ENCODE measurements at regions of chr1 and their contacts with region 1.

Region 1: DNA sequence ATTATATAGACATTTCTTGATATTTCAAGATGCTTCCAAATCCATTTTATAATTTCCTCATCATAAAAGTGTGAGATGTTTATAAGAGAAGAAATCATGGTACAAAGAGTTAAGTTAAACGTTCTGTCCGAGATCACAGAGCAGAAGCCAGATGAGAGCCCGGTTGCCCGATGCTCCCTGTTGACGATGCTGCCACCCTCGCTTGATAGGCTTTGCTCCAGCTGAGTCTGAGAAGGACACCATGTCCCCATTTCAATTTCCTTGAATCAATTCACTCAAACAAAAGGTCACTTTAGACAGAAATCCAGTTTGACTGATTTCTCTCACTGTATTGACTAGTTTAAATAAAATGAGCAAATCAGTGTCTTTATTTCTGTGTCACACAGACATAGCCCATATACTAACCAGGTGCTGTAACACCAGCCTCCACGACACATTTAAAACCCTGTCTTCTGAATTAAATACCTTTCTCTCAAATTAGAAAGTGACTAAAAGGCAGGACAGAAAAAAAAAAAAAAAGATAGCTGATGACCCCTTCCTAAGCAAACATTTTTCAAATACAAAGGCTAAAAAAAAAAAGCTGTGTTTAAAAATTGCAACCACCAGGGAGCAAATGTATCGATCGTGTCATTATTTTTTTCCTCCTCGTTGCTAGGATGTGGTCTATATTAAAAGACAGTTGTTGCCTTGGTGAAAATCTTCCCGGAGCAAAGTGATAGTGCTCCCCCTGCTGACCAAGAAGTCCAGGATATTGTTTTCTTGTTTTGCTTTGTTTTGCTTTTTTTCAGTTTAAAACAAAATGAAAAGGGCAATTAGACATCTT is 35.2 kb downstream of the DNASE2B start:
- DNase-seq: peak in 2 of 4 donors; percentile 63 to 78
- ATAC-seq: peak; percentile 92
- H3K4me3 ChIP-seq: no peak overlapping the region
- H3K27ac ChIP-seq: no peak overlapping the region
- H3K4me1 ChIP-seq: peaks cover 0 to 29% of the 10 kb centered on the region in 2 donors
- H3K27me3 ChIP-seq: no peaks in the 10 kb centered on the region
- CTCF ChIP-seq: peak; percentile 49 to 77

Region 2: GRCh38 chr1:84143796-84144565 is 289.5 kb before region 1 on chr1 and contains the start of gene PRKACB:
- intact Hi-C with region 1: loop called in 1 of 2 experiments (anchors 5 kb)
- DNase-seq: no peak
- ATAC-seq: peak; percentile 85
- H3K4me3 ChIP-seq: peak within 1 kb of the TSS in 1 of 2 donors; percentile 13
- H3K27ac ChIP-seq: peak within 1 kb of the TSS; percentile 55 to 57
- H3K4me1 ChIP-seq: peaks cover 0 to 36% of the 10 kb centered on the region in 2 donors
- H3K27me3 ChIP-seq: no peaks in the 10 kb centered on the region
- CTCF ChIP-seq: no peak
- polyA plus RNA-seq, gene PRKACB: 43.5 to 54.9 (median 46.8) TPM

Region 3: GRCh38 chr1:84245563-84245962 is 187.9 kb before region 1 on chr1:
- intact Hi-C with region 1: no loop called
- DNase-seq: no peak
- ATAC-seq: no peak
- H3K4me3 ChIP-seq: no peak overlapping the region
- H3K27ac ChIP-seq: no peak overlapping the region
- H3K4me1 ChIP-seq: no peaks in the 10 kb centered on the region
- H3K27me3 ChIP-seq: no peaks in the 10 kb centered on the region
- CTCF ChIP-seq: no peak

Region 4: DNA sequence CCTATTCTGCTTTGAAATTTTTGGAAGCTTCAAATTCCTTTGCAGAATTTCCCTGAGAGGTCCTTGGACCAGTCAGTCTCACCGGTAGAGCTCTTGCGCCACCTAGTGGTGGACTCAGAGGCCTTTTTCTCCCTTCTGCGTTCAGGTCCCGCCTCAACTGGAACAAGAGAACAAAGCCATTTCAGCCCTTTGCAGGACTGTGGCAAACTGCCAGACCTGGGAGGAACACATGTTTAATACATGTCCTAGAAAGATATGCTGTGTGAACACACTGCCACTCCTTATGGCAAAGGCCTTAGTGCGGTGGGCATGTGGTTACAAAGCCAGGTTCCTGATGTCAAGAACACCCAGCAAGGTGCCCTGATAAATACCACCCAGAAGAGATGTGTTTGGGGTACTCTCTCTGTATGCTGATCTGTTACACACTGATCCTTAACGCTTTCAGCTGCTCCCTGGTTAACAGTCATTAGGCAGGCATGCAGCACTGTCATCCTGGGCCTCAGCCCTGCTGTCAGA is 339.0 kb after region 1 on chr1:
- intact Hi-C with region 1: loop called in 1 of 2 experiments (anchors 10 kb)
- DNase-seq: peak in 3 of 4 donors; percentile 71 to 89 (median 75)
- ATAC-seq: peak; percentile 97
- H3K4me3 ChIP-seq: no peak overlapping the region
- H3K27ac ChIP-seq: no peak overlapping the region
- H3K4me1 ChIP-seq: no peaks in the 10 kb centered on the region
- H3K27me3 ChIP-seq: no peaks in the 10 kb centered on the region
- CTCF ChIP-seq: peak; percentile 88 to 95